Adrenal gland (tissue), 19 donors: ENCODE measurements at regions of chr7 and their contacts with region 1.

Region 1: GRCh38 chr7:2309889-2310331 is 4.3 kb downstream of the SNX8 start:
- DNase-seq: peak in 1 of 7 donors; percentile 32
- H3K4me3 ChIP-seq: no peak overlapping the region
- H3K27ac ChIP-seq: peak overlapping the region in 3 of 5 donors; percentile 62 to 80 (median 69)
- H3K4me1 ChIP-seq: peaks cover 0 to 5% of the 10 kb centered on the region in 2 donors
- H3K27me3 ChIP-seq: no peaks in the 10 kb centered on the region
- CTCF ChIP-seq: no peak
- POLR2A ChIP-seq: no peak

Region 2: GRCh38 chr7:2258661-2259365 is 51.1 kb before region 1 on chr7:
- intact Hi-C with region 1: loop called in 1 of 2 experiments (anchors 10 kb)
- DNase-seq: no peak
- H3K4me3 ChIP-seq: no peak overlapping the region
- H3K27ac ChIP-seq: no peak overlapping the region
- H3K4me1 ChIP-seq: no peaks in the 10 kb centered on the region
- H3K27me3 ChIP-seq: no peaks in the 10 kb centered on the region
- CTCF ChIP-seq: no peak
- POLR2A ChIP-seq: no peak